ENCODE measurements at regions of chr7 and their contacts with region 1.

Region 1: DNA sequence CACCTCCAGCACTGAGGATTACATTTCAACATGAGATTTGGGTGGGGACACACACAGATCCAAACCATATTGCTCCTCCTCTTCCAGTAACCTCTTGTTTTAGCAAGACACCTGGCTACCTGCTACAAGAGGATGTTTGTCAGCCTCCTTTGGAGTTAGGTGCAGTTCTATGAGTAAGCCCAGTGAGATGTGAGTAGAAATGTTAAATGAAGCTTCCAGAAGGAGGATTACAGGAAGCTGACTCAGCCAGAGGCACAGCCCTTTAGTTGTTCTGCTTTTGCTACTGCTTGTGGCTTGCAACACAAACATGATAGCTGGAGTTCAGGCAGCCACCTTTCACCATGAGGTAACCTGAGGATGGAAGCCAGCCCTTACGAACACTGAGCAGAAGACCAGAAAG is 382.7 kb upstream of the RNF32 start:
- DNase-seq: no peak
- ATAC-seq: no peak
- H3K4me3 ChIP-seq: no peak overlapping the region
- H3K27ac ChIP-seq: no peak overlapping the region
- H3K4me1 ChIP-seq: no peaks in the 10 kb centered on the region
- H3K27me3 ChIP-seq: no peaks in the 10 kb centered on the region
- CTCF ChIP-seq: no peak
- EP300 ChIP-seq: no peak
- POLR2A ChIP-seq: no peak
- RAD21 ChIP-seq: no peak

Region 2: DNA sequence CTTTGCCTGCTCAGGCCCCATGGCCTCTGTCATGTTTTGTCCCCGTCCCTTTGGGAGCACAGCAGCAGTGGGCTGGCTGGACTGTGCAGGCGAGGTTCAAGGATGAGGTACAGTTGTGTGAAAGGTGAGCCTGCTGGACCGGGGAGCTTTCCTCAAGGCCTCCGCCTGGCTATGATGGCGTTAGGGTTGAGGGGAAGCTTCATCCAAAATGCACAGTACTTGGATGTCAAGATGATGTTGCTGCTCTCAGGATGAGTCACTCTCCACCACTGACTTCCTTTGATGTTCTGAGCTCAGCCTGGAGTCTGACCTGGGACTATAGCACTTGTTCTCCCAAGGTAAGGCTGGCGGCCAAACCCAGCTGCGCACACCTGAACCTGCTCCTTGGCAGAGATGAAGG is 292.9 kb before region 1 on chr7:
- CTCF ChIA-PET with region 1: no interaction called
- POLR2A ChIA-PET with region 1: no interaction called
- RAD21 ChIA-PET with region 1: no interaction called
- SMC1A ChIA-PET with region 1: no interaction called
- in situ Hi-C with region 1: no loop called
- intact Hi-C with region 1: no loop called
- DNase-seq: no peak
- ATAC-seq: no peak
- H3K4me3 ChIP-seq: no peak overlapping the region
- H3K27ac ChIP-seq: no peak overlapping the region
- H3K4me1 ChIP-seq: no peaks in the 10 kb centered on the region
- H3K27me3 ChIP-seq: no peaks in the 10 kb centered on the region; a peak in 1 of 4 replicates
- CTCF ChIP-seq: no peak
- EP300 ChIP-seq: no peak
- POLR2A ChIP-seq: no peak
- RAD21 ChIP-seq: no peak

Region 3: DNA sequence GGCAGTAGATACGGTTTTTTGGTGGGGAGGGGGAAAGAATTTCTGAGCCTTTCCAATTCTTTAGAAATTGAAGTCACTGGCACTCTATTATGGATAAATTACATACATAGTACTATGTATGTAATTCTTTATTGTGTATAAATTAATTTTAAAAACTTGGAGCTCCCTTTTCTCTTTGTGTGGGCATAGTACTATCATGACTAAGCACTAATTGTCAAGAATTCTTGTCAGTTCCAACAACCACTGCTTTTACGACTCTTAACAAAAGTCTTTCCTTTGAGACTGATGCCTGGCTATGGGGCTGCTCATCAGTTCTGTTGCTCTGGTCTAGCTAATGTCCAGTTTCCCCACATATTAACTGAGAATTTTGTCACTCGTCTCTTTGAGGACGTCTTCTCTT is 17.4 kb after region 1 on chr7:
- CTCF ChIA-PET with region 1: no interaction called
- POLR2A ChIA-PET with region 1: no interaction called
- RAD21 ChIA-PET with region 1: no interaction called
- SMC1A ChIA-PET with region 1: interaction called, 3 read pairs
- in situ Hi-C with region 1: no loop called
- intact Hi-C with region 1: loop called (anchors 1 kb)
- DNase-seq: no peak
- ATAC-seq: no peak
- H3K4me3 ChIP-seq: no peak overlapping the region
- H3K27ac ChIP-seq: no peak overlapping the region
- H3K4me1 ChIP-seq: no peaks in the 10 kb centered on the region
- H3K27me3 ChIP-seq: no peaks in the 10 kb centered on the region
- CTCF ChIP-seq: no peak
- EP300 ChIP-seq: no peak
- POLR2A ChIP-seq: no peak
- RAD21 ChIP-seq: no peak